Ascending aorta (tissue), 2 donors: ENCODE measurements at regions of chr1 and their contacts with region 1.

Region 1: GRCh38 chr1:47333922-47334764 is 553 bp downstream of the CMPK1 start:
- DNase-seq: peak; percentile 31 to 90
- H3K4me3 ChIP-seq: peak overlapping the region; percentile 93 to 100
- H3K27ac ChIP-seq: peak overlapping the region; percentile 99 to 100
- H3K4me1 ChIP-seq: peaks cover 14 to 22% of the 10 kb centered on the region in 2 donors
- H3K27me3 ChIP-seq: no peaks in the 10 kb centered on the region
- CTCF ChIP-seq: peak in 1 of 3 experiments; percentile 28

Region 2: GRCh38 chr1:47023302-47024140 is 310.6 kb before region 1 on chr1 and contains the start of gene CYP4X1:
- intact Hi-C with region 1: loop called (anchors 5 kb)
- DNase-seq: no peak
- H3K4me3 ChIP-seq: peak within 1 kb of the TSS; percentile 52 to 75
- H3K27ac ChIP-seq: peak within 1 kb of the TSS; percentile 81 to 93
- H3K4me1 ChIP-seq: peaks cover 6 to 41% of the 10 kb centered on the region in 2 donors
- H3K27me3 ChIP-seq: no peaks in the 10 kb centered on the region
- CTCF ChIP-seq: no peak
- total RNA-seq, gene CYP4X1: 17.2 TPM

Region 3: GRCh38 chr1:47313915-47314664 is 20.1 kb before region 1 on chr1 and contains the start of gene STIL:
- intact Hi-C with region 1: loop called (anchors 1 kb)
- DNase-seq: peak; percentile 93 to 99
- H3K4me3 ChIP-seq: peak within 1 kb of the TSS; percentile 69 to 85
- H3K27ac ChIP-seq: peak within 1 kb of the TSS; percentile 68 to 87
- H3K4me1 ChIP-seq: peaks cover 0 to 7% of the 10 kb centered on the region in 2 donors
- H3K27me3 ChIP-seq: no peaks in the 10 kb centered on the region
- CTCF ChIP-seq: no peak
- total RNA-seq, gene STIL: 0.11 TPM

Region 4: DNA sequence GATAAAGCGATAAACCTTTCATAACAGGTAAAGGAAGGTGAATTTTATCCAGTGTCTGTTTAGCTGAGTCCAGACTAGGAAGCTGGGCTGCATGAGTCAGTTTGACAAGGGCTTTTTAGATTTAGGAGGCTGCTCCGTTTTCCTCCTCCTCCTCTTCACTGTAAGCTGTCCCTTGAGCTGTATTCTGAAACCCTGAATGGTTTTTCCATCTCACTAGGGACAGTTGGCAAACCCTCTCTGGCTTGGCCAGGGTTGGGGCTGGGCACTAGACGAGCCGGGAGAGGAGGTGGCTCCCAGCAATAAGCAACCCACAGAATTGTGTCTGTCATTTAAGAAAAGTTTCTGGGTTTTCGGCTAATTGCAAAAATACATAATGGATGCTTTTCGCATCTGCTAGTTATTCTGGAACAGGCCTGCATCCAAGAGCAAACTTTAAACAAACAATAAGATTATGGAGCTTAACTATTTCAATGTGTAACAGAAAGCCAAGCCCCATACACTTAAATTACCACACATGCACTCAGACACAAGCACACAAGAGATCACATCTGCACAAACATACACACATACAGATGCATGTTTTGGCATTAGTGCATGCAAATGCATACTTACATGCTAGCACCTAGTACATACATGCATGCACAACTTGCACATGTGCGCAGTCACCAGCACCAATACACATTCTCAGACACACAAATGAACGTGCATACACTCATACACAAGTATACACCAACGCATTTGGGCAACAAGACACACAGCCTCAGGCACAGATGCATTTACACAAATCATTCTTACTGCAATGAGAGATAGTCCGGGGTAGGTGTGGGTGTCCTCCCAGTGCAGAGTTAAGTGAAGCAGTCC is 54.1 kb after region 1 on chr1:
- intact Hi-C with region 1: no loop called
- DNase-seq: no peak
- H3K4me3 ChIP-seq: no peak overlapping the region
- H3K27ac ChIP-seq: no peak overlapping the region
- H3K4me1 ChIP-seq: no peaks in the 10 kb centered on the region
- H3K27me3 ChIP-seq: no peaks in the 10 kb centered on the region
- CTCF ChIP-seq: no peak

Region 5: GRCh38 chr1:47558601-47559593 is 224.8 kb after region 1 on chr1:
- intact Hi-C with region 1: no loop called
- DNase-seq: no peak
- H3K4me3 ChIP-seq: peak overlapping the region in 1 of 2 donors; percentile 19
- H3K27ac ChIP-seq: no peak overlapping the region
- H3K4me1 ChIP-seq: peaks cover 6 to 41% of the 10 kb centered on the region in 2 donors
- H3K27me3 ChIP-seq: no peaks in the 10 kb centered on the region
- CTCF ChIP-seq: no peak